ENCODE measurements at regions of chrX and their contacts with region 1.

Region 1: DNA sequence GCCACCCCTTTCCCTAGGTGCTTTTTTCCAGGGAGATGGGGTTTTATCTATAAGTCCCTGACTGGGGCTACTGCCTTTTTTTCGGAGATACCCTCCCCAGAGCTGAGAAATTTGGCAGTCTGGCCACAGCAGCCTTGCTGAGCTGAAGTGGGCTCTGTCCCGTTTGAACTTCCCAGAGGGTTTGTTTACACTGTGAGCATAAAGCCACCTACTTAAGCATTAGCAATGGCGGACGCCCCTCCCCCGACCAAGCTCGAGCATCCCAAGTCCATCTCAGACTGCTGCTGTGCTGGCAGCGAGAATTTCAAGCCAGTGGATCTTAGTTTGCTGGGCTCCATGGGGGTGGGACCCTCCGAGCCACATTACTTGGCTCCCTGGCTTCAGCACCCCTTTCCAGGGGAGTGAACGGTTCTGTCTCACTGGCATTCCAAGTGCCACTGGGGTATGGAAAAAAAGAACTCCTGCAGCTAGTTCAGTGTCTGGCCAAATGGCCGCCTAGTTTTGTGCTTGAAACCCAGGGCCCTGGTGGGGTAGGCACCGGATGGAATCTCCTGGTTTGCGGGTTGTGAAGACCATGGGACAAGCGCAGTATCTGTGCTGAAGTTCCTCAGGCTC is 456.4 kb upstream of the HTR2C start:
- DNase-seq: no peak
- ATAC-seq: no peak
- H3K4me3 ChIP-seq: no peak overlapping the region
- H3K27ac ChIP-seq: no peak overlapping the region
- H3K4me1 ChIP-seq: no peaks in the 10 kb centered on the region
- H3K27me3 ChIP-seq: no peaks in the 10 kb centered on the region
- CTCF ChIP-seq: no peak
- EP300 ChIP-seq: no peak
- POLR2A ChIP-seq: no peak
- RAD21 ChIP-seq: no peak

Region 2: GRCh38 chrX:114152130-114152529 is 24.6 kb after region 1 on chrX:
- CTCF ChIA-PET with region 1: no interaction called
- POLR2A ChIA-PET with region 1: no interaction called
- RAD21 ChIA-PET with region 1: no interaction called
- SMC1A ChIA-PET with region 1: no interaction called
- in situ Hi-C with region 1: no loop called
- intact Hi-C with region 1: no loop called
- DNase-seq: no peak
- ATAC-seq: no peak
- H3K4me3 ChIP-seq: no peak overlapping the region
- H3K27ac ChIP-seq: no peak overlapping the region
- H3K4me1 ChIP-seq: no peaks in the 10 kb centered on the region
- H3K27me3 ChIP-seq: no peaks in the 10 kb centered on the region
- CTCF ChIP-seq: no peak
- EP300 ChIP-seq: no peak
- POLR2A ChIP-seq: no peak
- RAD21 ChIP-seq: no peak

Region 3: DNA sequence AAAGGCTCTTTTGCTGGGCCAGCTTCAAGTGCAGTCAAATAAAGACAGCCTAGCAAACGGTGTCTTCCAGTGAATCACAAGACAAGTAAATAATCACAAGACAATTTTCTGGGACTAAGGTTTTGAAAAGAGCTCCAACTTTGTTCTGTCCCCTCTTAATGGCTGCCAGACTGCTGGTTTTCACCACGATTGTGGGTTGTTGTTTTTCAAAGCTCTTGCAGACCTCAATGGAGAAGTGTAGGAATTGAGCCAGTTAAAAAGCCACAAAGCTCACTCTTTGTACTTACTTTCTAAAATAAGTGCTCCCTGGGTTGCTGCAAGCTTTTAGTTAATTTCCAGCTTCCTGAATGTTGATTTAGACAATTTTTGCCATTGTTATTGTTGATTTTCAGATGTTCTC is 50.6 kb after region 1 on chrX:
- CTCF ChIA-PET with region 1: no interaction called
- POLR2A ChIA-PET with region 1: no interaction called
- RAD21 ChIA-PET with region 1: no interaction called
- SMC1A ChIA-PET with region 1: no interaction called
- in situ Hi-C with region 1: no loop called
- intact Hi-C with region 1: loop called (anchors 2 kb)
- DNase-seq: no peak
- ATAC-seq: no peak
- H3K4me3 ChIP-seq: no peak overlapping the region
- H3K27ac ChIP-seq: no peak overlapping the region
- H3K4me1 ChIP-seq: no peaks in the 10 kb centered on the region
- H3K27me3 ChIP-seq: no peaks in the 10 kb centered on the region
- CTCF ChIP-seq: no peak
- EP300 ChIP-seq: no peak
- POLR2A ChIP-seq: no peak
- RAD21 ChIP-seq: no peak